PC-9 (cell line): ENCODE measurements at regions of chr20 and their contacts with region 1.

Region 1: GRCh38 chr20:5977223-5977622 is 26.8 kb downstream of the MCM8 start:
- DNase-seq: no peak
- H3K4me3 ChIP-seq: no peak overlapping the region
- H3K27ac ChIP-seq: no peak overlapping the region
- H3K4me1 ChIP-seq: 0 out of 2 replicates have a peak, but pooled peaks cover 4% of the 10 kb centered on the region
- H3K27me3 ChIP-seq: no peaks in the 10 kb centered on the region
- CTCF ChIP-seq: no peak

Region 2: DNA sequence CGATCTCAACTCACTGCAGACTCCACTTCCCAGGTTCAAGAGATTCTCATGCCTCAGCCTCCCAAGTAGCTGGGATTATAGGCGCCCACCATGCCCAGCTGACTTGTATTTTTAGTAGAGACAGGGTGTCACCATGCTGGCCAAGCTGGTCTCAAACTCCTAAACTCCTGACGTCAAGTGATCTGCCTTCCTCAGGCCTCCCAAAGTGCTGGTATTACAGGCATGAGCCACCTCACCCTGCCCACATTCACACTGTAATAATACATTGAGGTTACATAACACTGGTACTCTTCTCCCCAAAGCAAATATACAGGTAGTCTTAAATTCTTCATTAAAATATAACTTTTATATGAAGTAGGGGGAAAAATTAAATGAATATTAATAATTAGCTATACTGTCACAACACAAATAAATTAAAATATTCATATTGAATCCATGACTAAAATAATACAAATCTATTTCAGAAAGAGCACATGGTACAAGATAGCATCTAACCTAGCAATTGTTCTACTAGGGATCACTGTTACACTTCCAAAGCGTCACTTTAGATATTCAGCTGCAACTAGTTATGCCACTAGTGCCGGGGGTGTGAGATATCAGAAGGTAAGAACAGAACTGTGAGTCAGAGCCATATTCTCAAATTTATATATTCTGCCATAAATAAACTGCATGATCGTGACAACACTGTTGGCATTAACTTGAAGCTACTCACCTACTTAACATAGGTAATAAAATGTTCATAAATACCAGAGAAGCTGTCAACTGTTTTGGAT is 396.1 kb before region 1 on chr20:
- CTCF ChIA-PET with region 1: interaction called, 25 read pairs
- POLR2A ChIA-PET with region 1: no interaction called
- intact Hi-C with region 1: no loop called
- DNase-seq: no peak
- H3K4me3 ChIP-seq: no peak overlapping the region
- H3K27ac ChIP-seq: no peak overlapping the region
- H3K4me1 ChIP-seq: no peaks in the 10 kb centered on the region
- H3K27me3 ChIP-seq: no peaks in the 10 kb centered on the region
- CTCF ChIP-seq: no peak

Region 3: DNA sequence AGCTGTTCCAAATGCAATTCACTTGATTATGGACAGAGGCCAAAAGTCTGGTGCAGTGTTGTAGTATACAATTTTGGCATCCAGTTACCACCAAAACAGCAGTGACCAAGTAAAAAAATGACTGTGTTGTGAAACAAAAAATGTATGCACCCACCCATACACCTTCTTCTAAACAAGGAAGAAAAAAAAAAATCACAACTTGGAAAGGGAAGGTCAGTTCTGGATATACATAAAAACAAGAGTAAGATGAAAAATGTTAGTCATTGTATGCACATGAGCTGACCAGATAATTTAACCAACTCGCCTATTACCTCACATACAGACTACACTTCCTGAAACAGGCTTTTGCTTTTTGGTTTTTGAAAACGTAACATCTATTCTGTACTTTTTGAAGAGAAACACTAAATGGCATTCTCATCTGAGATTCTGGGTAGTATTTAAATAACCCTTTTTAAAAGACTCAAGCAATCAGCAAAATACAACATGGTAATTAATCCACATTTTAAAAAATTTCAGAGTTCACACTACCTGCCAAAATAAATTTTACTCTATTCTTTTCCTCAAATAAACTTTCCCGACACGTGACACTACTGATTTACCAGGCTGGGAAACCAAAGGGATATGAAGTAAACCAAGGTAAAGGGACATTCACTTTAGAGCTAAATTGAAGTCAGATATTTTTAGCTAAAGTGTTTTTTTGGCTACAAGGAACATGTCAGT is 368.6 kb before region 1 on chr20:
- CTCF ChIA-PET with region 1: no interaction called
- POLR2A ChIA-PET with region 1: interaction called, 28 read pairs
- intact Hi-C with region 1: no loop called
- DNase-seq: peak in 1 of 2 experiments; percentile 52
- H3K4me3 ChIP-seq: peak overlapping the region; percentile 97; the same call in 1 of the 2 replicates
- H3K27ac ChIP-seq: peak overlapping the region; percentile 64
- H3K4me1 ChIP-seq: peaks cover 29% of the 10 kb centered on the region
- H3K27me3 ChIP-seq: no peaks in the 10 kb centered on the region
- CTCF ChIP-seq: no peak

Region 4: DNA sequence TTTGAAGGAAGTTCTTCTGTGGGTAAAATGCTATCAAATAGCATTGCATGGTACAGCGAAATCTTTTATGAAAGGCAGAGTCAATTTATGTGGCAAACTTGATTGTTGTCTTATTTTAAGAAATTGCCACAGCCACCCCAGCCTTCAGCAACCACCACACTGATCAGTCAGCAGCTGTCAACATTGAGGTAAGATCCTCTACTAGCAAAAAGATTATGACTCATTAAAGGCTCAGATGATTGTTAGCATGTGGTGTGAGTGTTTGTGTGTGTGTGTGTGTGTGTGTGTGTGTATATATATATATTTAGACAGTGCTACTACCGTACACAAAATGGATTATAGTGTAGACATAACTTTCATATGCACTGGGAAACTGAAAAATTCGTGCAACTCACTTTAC is 48.8 kb after region 1 on chr20:
- CTCF ChIA-PET with region 1: no interaction called
- POLR2A ChIA-PET with region 1: interaction called, 11 read pairs
- intact Hi-C with region 1: no loop called
- DNase-seq: no peak
- H3K4me3 ChIP-seq: no peak overlapping the region
- H3K27ac ChIP-seq: no peak overlapping the region
- H3K4me1 ChIP-seq: no peaks in the 10 kb centered on the region
- H3K27me3 ChIP-seq: no peaks in the 10 kb centered on the region
- CTCF ChIP-seq: no peak